ENCODE measurements at regions of chr6 and their contacts with region 1.

Region 1: DNA sequence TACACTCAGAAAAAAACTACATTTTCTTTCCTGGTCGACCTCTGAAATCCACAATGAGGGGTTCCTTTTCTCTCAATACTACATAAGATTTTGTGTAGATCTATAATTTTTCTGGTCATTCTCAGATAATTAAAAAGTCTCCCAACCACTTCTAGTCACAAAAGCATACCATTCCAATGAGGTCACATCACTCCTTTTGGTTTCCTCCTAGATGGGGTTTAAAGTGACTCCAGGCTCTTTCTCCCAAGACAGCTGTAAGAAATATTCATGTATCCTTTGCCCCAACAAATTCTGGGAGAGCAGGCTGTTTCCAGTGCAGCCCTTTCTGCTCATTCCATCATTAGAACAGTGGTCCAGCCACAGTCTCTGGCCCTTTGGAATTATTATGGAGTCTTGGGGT is 43.1 kb upstream of the BEND6 start:
- DNase-seq: peak; percentile 49
- H3K4me3 ChIP-seq: no peak overlapping the region
- H3K27ac ChIP-seq: peak overlapping the region; percentile 15
- H3K4me1 ChIP-seq: peaks cover 15% of the 10 kb centered on the region
- H3K27me3 ChIP-seq: no peaks in the 10 kb centered on the region
- CTCF ChIP-seq: no peak

Region 2: GRCh38 chr6:56927538-56928453 is 15.9 kb after region 1 on chr6:
- CTCF ChIA-PET with region 1: no interaction called
- dilution Hi-C with region 1: no loop called
- in situ Hi-C with region 1: no loop called
- intact Hi-C with region 1: loop called (anchors 2 kb)
- DNase-seq: no peak
- H3K4me3 ChIP-seq: no peak overlapping the region
- H3K27ac ChIP-seq: no peak overlapping the region
- H3K4me1 ChIP-seq: peaks cover 9% of the 10 kb centered on the region
- H3K27me3 ChIP-seq: no peaks in the 10 kb centered on the region
- CTCF ChIP-seq: no peak

Region 3: DNA sequence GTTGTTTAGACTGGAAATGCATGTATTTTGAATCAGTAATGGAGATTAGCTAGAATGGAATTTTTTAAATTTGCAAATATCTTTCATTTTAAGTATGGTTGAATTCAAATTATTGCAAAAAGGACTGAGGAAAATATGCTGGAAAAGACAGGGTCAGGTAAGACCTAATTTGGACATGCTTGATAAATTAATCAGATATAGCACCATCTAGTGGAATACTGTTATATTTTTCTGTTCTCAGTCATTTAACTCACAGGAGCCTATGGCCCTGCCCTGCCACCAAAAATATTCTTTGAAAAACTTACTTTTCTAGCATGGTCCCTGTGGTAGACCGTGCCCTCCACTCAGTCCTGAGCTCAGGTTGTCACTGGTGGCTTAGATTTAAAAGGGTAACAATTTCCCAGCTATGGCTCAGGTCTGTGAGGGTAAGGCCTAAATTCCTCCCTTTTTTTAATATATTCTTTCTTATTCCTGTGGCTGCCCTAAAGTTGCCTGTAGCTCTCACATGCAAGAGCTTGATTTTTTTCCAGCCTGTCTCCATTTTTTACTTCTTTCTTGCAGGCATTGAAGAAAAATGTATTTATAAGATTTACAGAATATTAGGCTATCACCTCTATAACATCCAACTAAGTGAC is 109.4 kb after region 1 on chr6:
- CTCF ChIA-PET with region 1: no interaction called
- dilution Hi-C with region 1: no loop called
- in situ Hi-C with region 1: loop called (anchors 10 to 25 kb)
- intact Hi-C with region 1: loop called (anchors 2 kb)
- DNase-seq: peak; percentile 30
- H3K4me3 ChIP-seq: no peak overlapping the region
- H3K27ac ChIP-seq: no peak overlapping the region
- H3K4me1 ChIP-seq: no peaks in the 10 kb centered on the region
- H3K27me3 ChIP-seq: no peaks in the 10 kb centered on the region
- CTCF ChIP-seq: peak; percentile 47 to 53

Measured in mammary epithelial cell (primary cell).